Head of caudate nucleus (tissue), 42 donors: ENCODE measurements at regions of chr19 and their contacts with region 1.

Region 1: DNA sequence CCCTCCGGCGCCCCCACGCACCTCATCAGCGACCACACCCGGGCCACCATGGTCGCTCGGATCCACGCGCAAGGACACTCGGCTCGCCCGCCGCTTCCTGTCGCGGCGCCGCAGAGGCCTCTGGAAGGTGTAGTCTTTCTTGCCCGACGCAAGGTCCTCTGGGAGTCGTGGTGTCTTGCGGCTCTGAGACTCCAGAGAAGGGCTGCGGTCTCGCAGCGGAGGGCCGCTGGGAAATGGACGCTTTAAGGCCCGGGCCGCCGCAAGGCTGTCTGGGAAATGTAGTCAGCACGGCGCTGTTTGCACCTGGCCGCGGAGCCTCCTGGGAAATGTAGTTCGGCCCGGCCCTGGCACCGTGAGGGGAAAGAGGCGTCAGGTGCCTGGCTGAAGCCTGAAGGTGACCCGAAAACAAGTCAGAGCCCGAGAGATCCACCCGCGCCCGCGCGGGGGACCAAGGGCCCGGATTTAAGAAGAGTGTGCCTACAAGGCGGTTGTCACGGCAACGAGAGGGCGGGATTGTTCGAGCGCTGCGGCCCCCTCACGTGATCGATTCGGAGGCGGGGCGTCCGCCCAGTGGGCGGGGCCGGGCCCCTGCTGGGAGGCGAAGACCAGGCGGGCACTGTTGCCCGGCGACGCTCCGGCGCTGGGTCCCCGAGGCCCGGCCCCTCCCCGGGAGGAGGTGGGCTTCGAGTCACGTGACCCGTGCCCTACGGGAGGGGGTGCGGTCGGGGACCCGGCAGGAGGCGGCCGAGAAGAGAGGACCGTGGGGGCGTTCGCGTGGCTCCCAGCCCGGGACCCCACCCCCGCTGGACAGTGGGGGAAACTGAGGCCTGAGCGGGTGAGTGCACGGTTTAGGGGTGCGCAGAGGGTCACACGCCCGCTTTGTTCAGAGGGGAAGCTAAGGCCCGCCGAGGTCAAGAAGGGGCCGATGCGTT is at the starts of genes HSD11B1L and MICOS13:
- DNase-seq: peak; percentile 98 to 100 (median 99)

Region 2: DNA sequence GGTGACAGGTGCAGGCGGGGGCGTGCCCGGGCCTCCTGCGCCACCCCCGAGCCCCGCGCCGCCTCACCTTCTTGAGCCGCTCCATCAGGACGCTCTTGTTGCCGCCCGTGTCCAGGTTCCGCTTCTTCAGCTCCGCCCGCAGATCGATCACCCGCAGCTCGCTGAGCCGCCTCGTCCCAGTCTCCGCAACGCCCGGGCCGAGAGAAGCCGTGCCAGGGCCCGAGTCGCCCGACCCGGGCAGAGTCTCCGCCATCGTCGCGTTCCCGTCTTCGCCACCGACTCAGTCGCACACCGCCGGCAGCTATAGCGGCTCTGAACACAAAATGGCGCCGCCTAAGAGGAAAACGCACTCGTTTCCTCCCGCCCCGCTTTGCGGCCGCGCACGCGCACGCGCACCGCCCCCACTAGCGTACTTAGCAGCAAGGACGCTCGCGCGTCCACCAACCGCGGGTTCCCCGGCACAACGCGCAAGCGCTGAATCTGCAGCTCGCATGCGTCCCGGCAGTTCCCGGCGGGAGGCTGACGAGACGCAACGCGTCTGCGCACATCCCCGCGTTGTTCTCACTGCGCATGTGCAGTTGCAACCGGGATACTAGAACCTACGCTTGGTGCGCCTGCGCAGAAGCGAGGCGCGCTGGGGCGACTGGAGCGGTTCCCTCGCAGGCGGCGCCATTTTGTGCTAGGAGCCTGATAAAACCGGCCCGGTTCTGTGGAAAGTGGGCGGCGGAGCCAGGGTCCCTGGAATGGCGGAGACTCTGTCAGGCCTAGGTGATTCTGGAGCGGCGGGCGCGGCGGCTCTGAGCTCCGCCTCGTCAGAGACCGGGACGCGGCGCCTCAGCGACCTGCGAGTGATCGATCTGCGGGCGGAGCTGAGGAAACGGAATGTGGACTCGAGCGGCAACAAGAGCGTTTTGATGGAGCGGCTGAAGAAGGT is 58.0 kb before region 1 on chr19 and contains the starts of genes SAFB and SAFB2:
- intact Hi-C with region 1: loop called (anchors 5 kb)
- DNase-seq: peak; percentile 93 to 99 (median 98)

Region 3: DNA sequence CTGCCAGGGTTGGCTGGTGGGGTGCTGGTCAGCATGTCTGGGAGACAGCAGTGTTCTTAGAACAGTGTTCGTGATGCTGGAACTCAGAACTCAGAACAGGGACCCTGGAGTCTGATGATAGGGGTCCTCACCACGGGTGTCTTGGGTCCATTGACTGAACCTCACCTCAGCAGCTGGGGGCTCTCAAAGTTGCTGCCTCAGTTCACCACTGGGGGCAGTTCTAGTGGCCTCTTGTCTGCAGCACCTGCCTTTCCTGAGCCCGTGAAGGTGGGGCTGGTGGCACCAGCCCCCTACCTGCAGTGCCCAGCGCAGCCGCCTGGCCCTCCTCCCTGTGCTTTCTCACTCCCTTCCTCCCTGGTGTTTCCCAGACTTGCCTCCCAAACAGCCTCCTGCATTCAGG is 29.3 kb before region 1 on chr19:
- intact Hi-C with region 1: no loop called
- DNase-seq: peak in 1 of 42 donors; percentile 5

Region 4: DNA sequence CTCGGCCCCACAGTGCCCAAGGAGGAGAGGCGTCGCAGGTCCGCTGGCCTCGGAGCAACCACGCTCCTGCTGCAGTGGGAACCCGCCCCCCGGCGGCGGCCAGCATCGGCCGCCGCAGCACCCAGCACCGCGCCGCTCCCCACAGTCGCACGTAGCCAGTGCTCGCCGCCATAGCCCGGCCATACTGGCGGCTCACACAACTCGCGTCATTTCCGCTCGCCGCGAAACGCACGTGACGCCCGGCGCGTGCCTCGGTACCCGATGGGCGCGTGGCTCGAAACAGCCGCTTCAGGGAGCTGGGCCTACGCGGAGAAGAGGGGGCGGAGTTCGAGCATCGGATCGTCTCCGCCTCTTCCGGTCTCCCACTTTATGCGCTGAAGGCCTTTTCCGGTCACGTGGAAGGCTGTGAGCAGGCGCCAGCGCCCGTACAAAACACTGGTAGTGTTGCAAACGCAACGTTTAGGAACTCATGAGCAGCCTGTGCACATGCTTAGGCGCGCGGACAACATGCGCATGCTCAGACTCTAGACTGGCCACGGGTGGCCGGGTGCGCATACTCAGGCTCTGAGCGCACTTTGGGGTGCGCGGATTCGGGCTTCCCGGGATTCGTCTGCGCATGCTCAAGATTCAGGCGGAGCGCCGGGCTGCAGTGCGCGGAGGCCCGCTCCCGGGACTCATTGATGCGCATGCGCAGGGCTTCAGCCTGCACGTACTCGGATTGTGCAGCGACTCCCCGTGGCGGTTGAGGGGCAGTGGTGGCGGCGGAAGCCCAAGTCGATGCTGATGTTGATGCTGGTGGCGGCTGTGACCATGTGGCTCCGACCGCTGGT is 39.5 kb after region 1 on chr19 and contains the starts of genes CATSPERD and LONP1:
- intact Hi-C with region 1: loop called (anchors 2 kb)
- DNase-seq: peak; percentile 95 to 99 (median 98)